Transverse colon (tissue), 4 donors: ENCODE measurements at regions of chr11 and their contacts with region 1.

Region 1: DNA sequence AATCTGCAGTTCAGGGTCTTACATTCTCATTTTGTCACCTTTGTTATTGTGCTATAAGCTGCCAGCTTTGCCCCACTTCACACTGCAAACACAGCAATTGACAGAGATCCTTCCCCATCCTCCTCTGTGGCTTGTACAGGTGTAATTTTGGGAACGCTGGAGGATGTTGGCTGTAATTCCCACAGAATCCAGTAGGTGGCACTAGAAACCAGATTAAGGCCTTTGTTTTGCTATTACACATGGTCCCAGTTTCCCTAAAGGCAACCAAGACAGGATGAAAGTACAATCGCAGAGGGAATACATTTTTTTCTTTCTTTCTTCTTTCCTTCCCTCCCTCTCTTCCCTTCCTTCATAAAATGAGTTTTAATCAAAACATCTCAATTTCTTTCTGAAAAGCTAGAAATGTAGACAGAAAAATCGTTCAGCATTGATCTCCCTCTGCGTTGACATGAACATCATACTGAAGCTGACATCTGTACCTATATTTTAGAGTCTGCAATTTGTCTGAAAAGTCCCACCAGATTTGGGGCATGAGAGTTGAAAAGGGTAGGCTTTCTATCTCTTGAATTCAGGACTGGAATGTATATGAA is 21.3 kb upstream of the NELL1 start:
- DNase-seq: peak; percentile 23
- H3K4me3 ChIP-seq: no peak overlapping the region
- H3K27ac ChIP-seq: no peak overlapping the region
- H3K4me1 ChIP-seq: no peaks in the 10 kb centered on the region
- H3K27me3 ChIP-seq: no peaks in the 10 kb centered on the region
- CTCF ChIP-seq: peak; percentile 72 to 89 (median 86)
- EP300 ChIP-seq: no peak
- POLR2A ChIP-seq: no peak

Region 2: GRCh38 chr11:20609727-20610707 is 38.1 kb before region 1 on chr11:
- in situ Hi-C with region 1: no loop called
- intact Hi-C with region 1: no loop called
- DNase-seq: peak; percentile 62
- H3K4me3 ChIP-seq: no peak overlapping the region
- H3K27ac ChIP-seq: no peak overlapping the region
- H3K4me1 ChIP-seq: peaks cover 0 to 6% (median 0%) of the 10 kb centered on the region in 4 donors
- H3K27me3 ChIP-seq: peaks cover 67% of the 10 kb centered on the region
- CTCF ChIP-seq: peak; percentile 66 to 90 (median 86)
- EP300 ChIP-seq: no peak
- POLR2A ChIP-seq: no peak

Region 3: DNA sequence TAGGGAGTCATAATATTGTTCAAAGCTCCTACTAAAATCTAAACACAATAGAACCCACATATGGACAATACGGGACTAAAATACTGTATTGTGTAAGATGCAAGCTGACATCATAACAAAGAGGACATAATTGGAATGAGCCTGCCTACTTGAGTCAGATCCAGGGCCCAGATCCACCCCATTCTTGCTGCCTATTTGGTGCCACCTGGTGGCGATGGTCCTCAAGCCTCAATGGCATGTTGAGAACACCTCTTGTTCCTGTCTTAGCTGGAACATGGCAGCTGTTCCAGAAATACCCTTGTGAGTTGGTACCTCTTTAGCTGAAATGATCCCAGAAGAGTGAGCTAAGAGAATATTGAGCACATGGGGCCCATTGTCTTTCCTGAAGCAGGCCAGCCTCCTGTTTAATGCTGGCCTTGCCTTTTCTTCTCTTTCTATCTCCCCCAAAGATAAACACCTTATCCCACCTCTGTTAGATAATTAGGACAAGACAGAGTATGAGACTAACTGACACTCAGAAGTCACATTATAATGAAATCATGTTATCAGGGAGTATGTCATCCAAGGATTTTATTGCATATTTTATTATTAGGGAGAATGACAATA is 863.9 kb after region 1 on chr11:
- in situ Hi-C with region 1: loop called in 2 of 4 experiments (anchors 25 kb)
- intact Hi-C with region 1: no loop called
- DNase-seq: peak; percentile 28
- H3K4me3 ChIP-seq: no peak overlapping the region
- H3K27ac ChIP-seq: no peak overlapping the region
- H3K4me1 ChIP-seq: no peaks in the 10 kb centered on the region
- H3K27me3 ChIP-seq: no peaks in the 10 kb centered on the region
- CTCF ChIP-seq: peak in 3 of 5 experiments; percentile 11 to 38 (median 30)
- EP300 ChIP-seq: no peak
- POLR2A ChIP-seq: no peak

Region 4: GRCh38 chr11:22130462-22131053 is 1482.5 kb after region 1 on chr11:
- in situ Hi-C with region 1: loop called in 1 of 4 experiments (anchors 25 kb)
- intact Hi-C with region 1: no loop called
- DNase-seq: no peak
- H3K4me3 ChIP-seq: no peak overlapping the region
- H3K27ac ChIP-seq: no peak overlapping the region
- H3K4me1 ChIP-seq: no peaks in the 10 kb centered on the region
- H3K27me3 ChIP-seq: no peaks in the 10 kb centered on the region
- CTCF ChIP-seq: peak in 1 of 5 experiments; percentile 11
- EP300 ChIP-seq: no peak
- POLR2A ChIP-seq: no peak

Region 5: GRCh38 chr11:22304337-22304961 is 1656.4 kb after region 1 on chr11:
- in situ Hi-C with region 1: loop called in 1 of 4 experiments (anchors 25 kb)
- intact Hi-C with region 1: no loop called
- DNase-seq: no peak
- H3K4me3 ChIP-seq: no peak overlapping the region
- H3K27ac ChIP-seq: no peak overlapping the region
- H3K4me1 ChIP-seq: no peaks in the 10 kb centered on the region
- H3K27me3 ChIP-seq: no peaks in the 10 kb centered on the region
- CTCF ChIP-seq: peak; percentile 60 to 70 (median 65)
- EP300 ChIP-seq: no peak
- POLR2A ChIP-seq: no peak